RWPE1 (cell line): ENCODE measurements at regions of chr1 and their contacts with region 1.

Region 1: GRCh38 chr1:62746085-62746808 is 37.7 kb upstream of the ATG4C start:
- DNase-seq: peak; percentile 32
- H3K27ac ChIP-seq: no peak overlapping the region
- CTCF ChIP-seq: peak; percentile 63

Region 2: GRCh38 chr1:62508187-62508758 is 238.0 kb before region 1 on chr1:
- CTCF ChIA-PET with region 1: interaction called, 10 read pairs
- POLR2A ChIA-PET with region 1: no interaction called
- DNase-seq: peak; percentile 21
- H3K27ac ChIP-seq: no peak overlapping the region
- CTCF ChIP-seq: peak; percentile 73

Region 3: DNA sequence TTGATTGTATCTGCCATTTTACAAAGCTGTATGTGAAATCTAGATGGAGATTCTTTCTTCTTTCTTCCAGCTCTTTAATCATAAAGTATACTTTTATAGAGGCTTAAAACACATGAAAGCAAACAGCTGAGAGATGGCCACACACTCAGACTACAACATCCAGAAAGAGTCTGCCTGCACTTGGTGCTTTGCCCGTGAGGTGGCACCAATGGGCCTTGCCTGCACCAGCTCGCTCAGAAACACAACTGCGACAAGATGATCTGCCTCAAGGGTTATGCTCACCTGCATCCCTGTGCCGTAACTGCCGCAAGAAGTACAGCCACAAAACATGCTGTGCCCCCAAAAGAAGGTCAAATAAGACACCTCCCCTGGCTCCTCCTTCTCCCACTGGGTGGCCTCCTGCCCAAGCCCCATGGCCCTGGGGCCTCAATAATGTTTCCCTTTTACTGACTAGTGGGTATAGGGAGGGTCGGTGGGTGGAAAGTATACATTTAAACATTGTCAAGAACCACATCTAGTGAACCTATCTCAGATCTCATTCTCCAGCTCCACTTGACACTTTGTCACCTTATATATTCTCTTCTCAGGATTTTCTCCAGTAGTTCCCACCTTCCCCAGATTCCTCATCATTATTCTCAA is 215.6 kb before region 1 on chr1:
- CTCF ChIA-PET with region 1: interaction called, 20 read pairs
- POLR2A ChIA-PET with region 1: no interaction called
- DNase-seq: peak; percentile 39
- H3K27ac ChIP-seq: no peak overlapping the region
- CTCF ChIP-seq: peak; percentile 72

Region 4: GRCh38 chr1:62765981-62766380 is 19.7 kb after region 1 on chr1:
- CTCF ChIA-PET with region 1: no interaction called
- POLR2A ChIA-PET with region 1: no interaction called
- DNase-seq: no peak
- H3K27ac ChIP-seq: no peak overlapping the region
- CTCF ChIP-seq: no peak

Region 5: GRCh38 chr1:62836856-62837540 is 90.8 kb after region 1 on chr1:
- CTCF ChIA-PET with region 1: no interaction called
- POLR2A ChIA-PET with region 1: no interaction called
- DNase-seq: no peak
- H3K27ac ChIP-seq: no peak overlapping the region
- CTCF ChIP-seq: no peak